Gastrocnemius medialis (tissue), 4 donors: ENCODE measurements at regions of chrX and their contacts with region 1.

Region 1: DNA sequence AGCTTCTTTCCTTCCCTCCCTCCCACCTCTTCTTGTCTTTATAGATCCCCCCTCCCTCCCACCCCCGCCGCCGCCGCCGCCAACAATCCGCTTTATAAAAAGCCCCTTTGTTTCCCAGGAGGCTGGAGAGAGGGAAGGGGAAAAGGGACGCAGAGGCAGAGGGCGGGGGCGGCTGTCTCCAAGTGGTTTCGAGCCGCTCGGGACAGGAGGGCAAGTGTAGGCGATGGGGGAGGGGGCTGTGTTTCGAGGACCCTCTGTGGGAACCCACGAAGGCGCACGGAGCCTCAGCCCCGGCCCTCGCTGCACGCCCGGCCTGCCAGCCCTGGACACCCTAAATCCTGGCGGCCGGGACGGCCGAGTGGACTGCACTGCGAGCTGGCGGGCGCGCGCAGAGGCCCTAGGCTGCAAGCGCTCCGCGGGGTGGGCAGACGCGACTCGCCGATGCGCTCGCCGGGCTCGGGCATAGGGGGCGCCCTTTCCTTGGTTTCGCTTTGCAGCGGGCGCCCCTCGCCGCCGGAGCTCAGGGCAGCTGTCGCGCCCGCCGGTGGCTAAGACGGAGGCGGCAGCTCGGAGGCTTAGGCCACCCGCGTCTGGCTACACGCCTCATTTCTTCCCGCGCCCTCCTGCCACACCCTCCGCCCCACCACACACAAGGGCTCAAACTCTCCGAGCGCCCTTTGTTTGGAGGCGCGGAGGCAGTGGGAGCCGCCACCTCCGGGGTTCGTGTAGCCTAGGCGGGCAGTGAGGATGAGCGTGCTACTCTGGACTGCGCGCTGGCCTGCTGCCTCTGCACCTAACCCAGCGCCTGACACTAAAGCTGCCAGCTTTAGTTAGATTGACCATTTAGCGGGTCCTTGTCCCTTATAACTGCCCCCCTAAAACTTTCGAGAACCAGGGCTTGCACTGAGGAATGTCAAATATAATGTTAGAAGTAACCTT is 2.2 kb downstream of the MAMLD1 start:
- DNase-seq: peak; percentile 29 to 65
- ATAC-seq: peak; percentile 38 to 51
- H3K4me3 ChIP-seq: peak overlapping the region; percentile 67 to 93 (median 71)
- H3K27ac ChIP-seq: peak overlapping the region; percentile 79 to 89 (median 85)
- H3K4me1 ChIP-seq: peaks cover 0 to 9% of the 10 kb centered on the region in 2 donors
- H3K27me3 ChIP-seq: no peaks in the 10 kb centered on the region
- CTCF ChIP-seq: peak; percentile 55 to 78 (median 66)
- POLR2A ChIP-seq: peak; percentile 46 to 56

Region 2: GRCh38 chrX:149938427-149939270 is 426.7 kb before region 1 on chrX and contains the start of gene EOLA2:
- in situ Hi-C with region 1: no loop called
- intact Hi-C with region 1: loop called (anchors 10 kb)
- DNase-seq: peak; percentile 92 to 95
- ATAC-seq: peak; percentile 66 to 74
- H3K4me3 ChIP-seq: peak within 1 kb of the TSS; percentile 69 to 84 (median 74)
- H3K27ac ChIP-seq: peak within 1 kb of the TSS; percentile 90 to 96 (median 93)
- H3K4me1 ChIP-seq: peaks cover 6 to 7% of the 10 kb centered on the region in 2 donors
- H3K27me3 ChIP-seq: no peaks in the 10 kb centered on the region
- CTCF ChIP-seq: peak in 4 of 5 experiments; percentile 43 to 62 (median 52)
- POLR2A ChIP-seq: peak; percentile 53 to 55
- total RNA-seq, gene EOLA2: 7.2 to 17.1 (median 11.0) TPM

Region 3: DNA sequence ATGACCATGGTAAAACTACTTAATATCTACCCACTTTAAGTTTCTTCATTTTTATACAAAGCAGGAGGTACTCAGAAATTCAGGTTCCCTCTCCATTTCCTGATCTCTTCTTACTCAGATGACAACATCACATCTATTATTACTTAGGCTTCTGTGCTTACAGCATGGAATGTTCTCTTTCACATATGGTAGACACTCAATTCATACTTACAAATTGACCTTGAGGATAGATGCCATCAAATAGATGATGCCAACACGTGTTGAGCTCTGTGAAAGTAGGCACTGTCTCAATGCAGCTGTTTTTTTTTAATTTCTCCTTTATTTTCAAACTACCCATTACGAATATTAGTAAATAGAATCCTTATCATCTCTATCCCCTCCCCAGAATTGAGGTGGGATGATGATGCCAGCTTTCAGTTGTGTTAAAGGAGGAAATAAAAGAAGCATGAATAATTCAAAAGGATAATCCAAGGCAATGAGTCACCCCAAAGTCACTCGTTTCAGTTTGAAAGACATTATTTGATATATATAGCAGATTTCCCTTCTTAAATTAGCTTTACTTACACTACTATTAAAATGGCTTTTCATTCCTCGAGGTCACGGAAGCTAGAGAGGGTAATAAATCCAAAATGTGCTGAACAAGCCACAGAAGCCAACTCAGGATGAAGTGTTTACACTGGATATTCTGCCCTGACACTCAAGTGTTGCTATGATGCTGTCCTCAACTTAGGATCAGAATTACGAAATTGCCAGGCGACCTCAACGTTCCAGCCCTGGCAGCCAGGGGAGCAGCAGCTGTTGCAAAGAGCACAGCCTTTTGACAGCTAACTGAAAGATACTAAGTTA is 302.8 kb before region 1 on chrX:
- in situ Hi-C with region 1: no loop called
- intact Hi-C with region 1: loop called (anchors 10 kb)
- DNase-seq: peak; percentile 67 to 82
- ATAC-seq: peak; percentile 99 to 100
- H3K4me3 ChIP-seq: no peak overlapping the region
- H3K27ac ChIP-seq: peak overlapping the region; percentile 61 to 74 (median 70)
- H3K4me1 ChIP-seq: peaks cover 4% of the 10 kb centered on the region in 2 donors
- H3K27me3 ChIP-seq: no peaks in the 10 kb centered on the region
- CTCF ChIP-seq: peak in 3 of 5 experiments; percentile 11 to 36 (median 29)
- POLR2A ChIP-seq: no peak

Region 4: GRCh38 chrX:150219374-150220185 is 145.7 kb before region 1 on chrX:
- in situ Hi-C with region 1: no loop called
- intact Hi-C with region 1: loop called (anchors 10 kb)
- DNase-seq: no peak
- ATAC-seq: no peak
- H3K4me3 ChIP-seq: no peak overlapping the region
- H3K27ac ChIP-seq: no peak overlapping the region
- H3K4me1 ChIP-seq: no peaks in the 10 kb centered on the region
- H3K27me3 ChIP-seq: no peaks in the 10 kb centered on the region
- CTCF ChIP-seq: no peak
- POLR2A ChIP-seq: no peak

Region 5: DNA sequence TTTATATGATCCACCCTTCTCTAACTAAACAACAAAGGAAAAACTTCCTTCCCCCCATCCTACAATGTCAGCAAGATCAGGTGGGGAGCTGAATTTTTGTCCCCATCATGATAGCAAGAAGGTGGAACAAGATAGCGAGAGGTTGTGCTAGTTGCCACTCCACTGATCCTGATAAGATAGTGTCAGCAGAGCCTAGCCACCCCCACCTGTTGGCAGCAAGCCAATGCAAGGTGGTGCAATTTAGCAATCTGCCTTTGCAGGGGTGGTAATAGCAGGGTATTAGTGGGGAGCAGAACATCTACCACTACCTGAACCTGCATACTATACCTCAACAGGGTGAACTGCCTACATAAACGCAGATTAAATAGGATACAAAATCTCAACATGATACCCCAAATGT is 82.4 kb before region 1 on chrX:
- in situ Hi-C with region 1: no loop called
- intact Hi-C with region 1: no loop called
- DNase-seq: no peak
- ATAC-seq: no peak
- H3K4me3 ChIP-seq: no peak overlapping the region
- H3K27ac ChIP-seq: no peak overlapping the region
- H3K4me1 ChIP-seq: no peaks in the 10 kb centered on the region
- H3K27me3 ChIP-seq: no peaks in the 10 kb centered on the region
- CTCF ChIP-seq: no peak
- POLR2A ChIP-seq: no peak

Region 6: GRCh38 chrX:150486011-150486410 is 120.7 kb after region 1 on chrX:
- in situ Hi-C with region 1: no loop called
- intact Hi-C with region 1: loop called (anchors 1 kb)
- DNase-seq: peak in 1 of 2 donors; percentile 46
- ATAC-seq: peak; percentile 79 to 88
- H3K4me3 ChIP-seq: no peak overlapping the region
- H3K27ac ChIP-seq: no peak overlapping the region
- H3K4me1 ChIP-seq: no peaks in the 10 kb centered on the region
- H3K27me3 ChIP-seq: no peaks in the 10 kb centered on the region
- CTCF ChIP-seq: peak; percentile 27 to 61 (median 47)
- POLR2A ChIP-seq: no peak

Region 7: GRCh38 chrX:150568320-150569154 is 203.2 kb after region 1 on chrX and contains the start of gene MTM1:
- in situ Hi-C with region 1: no loop called
- intact Hi-C with region 1: loop called (anchors 2 kb)
- DNase-seq: peak; percentile 91 to 95
- ATAC-seq: peak; percentile 93 to 94
- H3K4me3 ChIP-seq: peak within 1 kb of the TSS; percentile 64 to 71 (median 70)
- H3K27ac ChIP-seq: peak within 1 kb of the TSS; percentile 76 to 87 (median 82)
- H3K4me1 ChIP-seq: peaks cover 16 to 30% of the 10 kb centered on the region in 2 donors
- H3K27me3 ChIP-seq: no peaks in the 10 kb centered on the region
- CTCF ChIP-seq: no peak
- POLR2A ChIP-seq: peak; percentile 58 to 63
- total RNA-seq, gene MTM1: 6.3 to 18.1 (median 11.5) TPM

Region 8: DNA sequence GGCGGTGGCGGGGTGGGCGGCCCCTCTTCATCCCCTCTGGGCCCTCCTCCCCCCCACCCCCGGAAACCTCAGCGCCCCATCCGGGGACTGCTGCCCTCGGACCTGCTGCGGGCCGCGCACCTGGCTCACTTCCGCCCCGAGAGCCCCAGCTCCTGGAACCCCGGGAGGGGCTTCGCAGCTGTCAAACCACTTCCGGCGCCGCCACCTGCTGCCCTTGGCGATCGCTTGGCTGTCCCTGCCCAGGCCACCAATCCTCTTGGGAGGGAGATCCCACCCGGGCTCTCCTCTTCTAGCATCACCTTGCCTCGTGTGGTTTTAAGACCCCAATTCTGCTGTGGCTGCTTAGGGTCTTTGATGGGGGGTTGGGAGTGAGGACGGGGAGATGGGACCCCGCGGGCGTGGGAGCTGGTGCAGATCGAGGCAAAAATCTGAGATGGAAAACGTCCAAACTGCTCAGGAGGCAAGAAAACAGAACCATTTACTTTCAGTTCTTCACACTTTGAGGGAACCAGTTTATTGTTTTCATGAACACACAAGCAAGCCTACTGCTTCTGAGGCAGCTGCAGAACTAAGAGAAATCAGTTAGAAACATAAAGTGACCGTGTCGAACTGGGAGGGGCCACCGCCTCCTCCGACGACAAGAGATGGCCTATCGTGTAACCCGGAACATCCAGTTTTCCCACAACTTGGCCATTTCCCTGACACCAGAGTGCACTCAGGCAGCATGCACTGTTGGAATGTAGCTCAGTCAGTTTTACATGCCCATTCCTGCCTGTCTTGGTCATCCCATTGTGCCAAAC is 328.7 kb after region 1 on chrX:
- in situ Hi-C with region 1: no loop called
- intact Hi-C with region 1: loop called (anchors 10 kb)
- DNase-seq: peak; percentile 10 to 61
- ATAC-seq: peak; percentile 51 to 80
- H3K4me3 ChIP-seq: peak overlapping the region; percentile 60 to 68 (median 62)
- H3K27ac ChIP-seq: peak overlapping the region; percentile 82 to 87 (median 84)
- H3K4me1 ChIP-seq: peaks cover 5 to 7% of the 10 kb centered on the region in 2 donors
- H3K27me3 ChIP-seq: no peaks in the 10 kb centered on the region
- CTCF ChIP-seq: no peak
- POLR2A ChIP-seq: no peak

Region 9: DNA sequence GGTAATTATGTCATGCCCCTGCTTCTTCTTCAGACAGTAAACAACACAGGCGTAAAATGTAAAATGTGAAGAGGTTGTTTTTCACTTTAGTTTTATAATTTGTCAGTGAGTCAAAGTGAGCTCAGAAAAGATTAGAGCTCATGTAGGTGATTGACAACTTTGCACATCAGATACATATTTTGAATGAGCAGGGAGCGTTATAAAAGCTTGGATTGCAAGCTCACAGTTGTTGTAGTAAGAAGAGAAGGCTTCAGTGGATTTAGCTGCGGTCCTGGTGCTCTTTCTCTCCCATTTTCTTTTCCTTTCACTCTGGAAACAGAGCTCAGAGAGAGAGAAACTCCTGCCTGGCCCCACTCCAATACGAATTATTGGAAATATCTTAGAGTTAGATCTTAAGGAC is 354.3 kb after region 1 on chrX:
- in situ Hi-C with region 1: no loop called
- intact Hi-C with region 1: no loop called
- DNase-seq: no peak
- ATAC-seq: no peak
- H3K4me3 ChIP-seq: no peak overlapping the region
- H3K27ac ChIP-seq: no peak overlapping the region
- H3K4me1 ChIP-seq: peaks cover 0 to 6% of the 10 kb centered on the region in 2 donors
- H3K27me3 ChIP-seq: no peaks in the 10 kb centered on the region
- CTCF ChIP-seq: no peak
- POLR2A ChIP-seq: no peak